Right cardiac atrium (tissue), 5 donors: ENCODE measurements at regions of chr11 and their contacts with region 1.

Region 1: DNA sequence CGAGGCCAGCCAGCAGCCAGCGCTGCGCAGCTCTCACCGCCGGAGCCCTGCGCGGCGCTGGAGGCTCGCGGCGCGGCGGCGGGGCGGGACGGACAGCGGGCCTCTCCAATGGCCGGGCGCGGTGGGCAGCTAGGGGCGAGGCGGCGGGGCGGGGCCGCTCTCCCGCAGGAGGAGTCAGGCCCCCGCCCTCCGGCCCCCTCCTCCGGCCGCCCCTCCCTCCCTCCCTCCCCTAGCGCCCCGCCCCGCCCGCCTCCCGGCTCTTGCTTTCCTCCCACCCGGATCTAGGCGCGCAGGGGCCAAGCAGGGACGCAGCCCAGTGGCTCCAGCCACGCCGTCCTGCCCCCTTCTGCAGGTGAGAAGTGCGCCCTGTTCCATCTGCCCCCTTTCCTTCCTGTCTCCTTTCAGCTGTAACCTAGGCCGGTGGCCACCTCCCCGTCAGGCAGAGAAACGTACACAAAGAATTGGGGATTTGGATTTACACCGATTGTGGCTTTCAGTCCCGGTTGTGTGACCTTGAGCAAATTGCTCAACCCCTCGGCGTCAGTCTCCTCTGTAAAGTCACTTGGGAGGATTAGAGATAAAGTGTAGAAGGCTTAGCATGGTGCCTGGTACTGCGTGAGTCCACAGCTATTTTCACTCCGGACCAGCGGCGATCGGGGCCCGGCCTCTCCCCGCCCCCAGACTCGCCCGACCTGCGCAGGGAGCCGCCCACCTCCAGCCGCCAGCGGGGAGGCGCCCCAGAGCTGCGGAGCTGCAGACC is at the start of gene FZD4:
- DNase-seq: peak; percentile 94 to 98 (median 97)
- ATAC-seq: peak; percentile 94 to 95
- H3K4me3 ChIP-seq: peak within 1 kb of the TSS; percentile 87
- H3K27ac ChIP-seq: peak within 1 kb of the TSS; percentile 97
- H3K4me1 ChIP-seq: peaks cover 8% of the 10 kb centered on the region
- H3K27me3 ChIP-seq: no peaks in the 10 kb centered on the region
- total RNA-seq, gene FZD4: 20.6 to 28.3 (median 24.6) TPM

Region 2: DNA sequence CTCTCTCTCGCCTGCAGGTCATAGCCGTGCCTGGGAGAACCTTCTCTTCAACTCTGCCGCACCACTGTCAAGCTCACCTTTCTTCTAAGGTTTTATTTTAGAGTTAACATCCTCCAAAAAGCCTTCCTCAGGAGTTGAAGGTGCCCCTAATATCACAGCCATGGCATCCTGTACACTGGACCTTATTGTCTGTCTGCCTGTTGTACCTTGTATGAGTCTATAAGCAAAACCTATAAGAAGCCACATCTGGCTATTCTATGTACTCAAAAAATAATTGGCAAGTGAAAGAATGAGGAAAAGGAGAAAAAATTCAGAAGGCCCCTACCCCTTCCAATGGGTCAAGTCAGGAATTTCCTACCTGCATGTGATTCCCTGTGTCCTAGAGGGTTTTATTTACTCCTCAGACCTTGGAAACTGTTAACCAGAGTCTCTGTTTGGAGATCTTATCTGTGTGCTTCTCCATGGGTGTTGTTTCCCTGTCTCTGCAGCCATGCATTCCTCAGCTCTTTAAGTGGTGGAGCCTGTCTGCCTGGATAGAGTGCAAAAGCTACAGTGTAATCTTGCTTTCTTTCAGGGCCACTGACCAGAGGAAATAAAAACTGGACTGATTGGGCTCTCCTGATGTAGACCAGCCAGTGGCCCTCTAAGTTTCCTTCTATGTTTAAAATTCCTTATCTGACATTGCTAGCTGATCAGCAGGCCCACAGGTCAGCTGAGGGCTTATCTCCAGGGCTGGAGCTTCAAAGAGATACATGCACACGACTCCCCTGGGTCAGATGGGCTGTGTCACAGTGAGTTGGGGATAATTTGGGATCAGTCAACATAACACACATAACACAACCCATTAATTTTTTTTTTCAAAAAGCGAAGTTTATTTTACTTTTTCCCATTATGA is 44.6 kb after region 1 on chr11:
- intact Hi-C with region 1: loop called in 1 of 4 experiments (anchors 5 kb)
- DNase-seq: peak in 1 of 3 donors; percentile 72
- ATAC-seq: peak; percentile 90
- H3K4me3 ChIP-seq: no peak overlapping the region
- H3K27ac ChIP-seq: peak overlapping the region; percentile 59
- H3K4me1 ChIP-seq: no peaks in the 10 kb centered on the region
- H3K27me3 ChIP-seq: no peaks in the 10 kb centered on the region

Region 3: DNA sequence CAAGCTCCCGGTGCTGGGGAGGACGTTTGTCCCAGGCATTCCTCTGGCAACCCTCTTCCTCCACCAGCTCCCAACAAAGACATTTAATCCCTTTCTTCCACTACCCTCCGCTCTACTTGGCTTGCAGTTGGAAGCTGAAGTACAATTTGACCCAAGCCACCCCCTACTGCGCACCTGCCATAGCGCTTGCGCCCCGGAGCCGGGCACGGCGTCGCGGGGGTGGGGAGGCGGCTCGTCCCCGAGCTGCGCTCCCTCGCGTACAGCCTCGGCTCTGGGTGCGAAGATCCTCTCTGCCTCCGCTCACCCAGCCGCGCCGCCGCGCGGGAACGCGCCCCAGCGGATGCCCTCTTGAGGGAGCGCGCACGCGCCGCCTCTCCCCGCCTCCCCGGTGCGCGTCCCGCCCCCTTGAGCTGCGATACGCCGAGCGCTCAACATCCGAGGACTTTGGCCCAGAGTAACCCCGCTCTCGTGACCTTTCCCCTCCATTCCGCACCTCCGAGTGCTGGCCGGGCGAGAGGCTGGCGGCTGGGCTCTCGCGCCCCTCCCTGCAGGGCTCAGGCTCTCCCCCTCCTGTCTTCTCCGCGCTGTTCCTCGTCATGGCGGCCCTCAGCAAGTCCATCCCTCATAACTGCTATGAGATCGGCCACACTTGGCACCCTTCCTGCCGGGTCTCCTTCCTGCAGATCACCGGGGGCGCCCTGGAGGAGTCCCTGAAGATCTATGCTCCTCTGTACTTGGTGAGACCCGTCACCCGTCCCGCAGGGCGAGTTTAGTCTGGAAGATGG is 82.1 kb after region 1 on chr11 and contains the start of gene TMEM135:
- intact Hi-C with region 1: loop called in 2 of 4 experiments (anchors 5 kb)
- DNase-seq: peak; percentile 96 to 98 (median 98)
- ATAC-seq: peak; percentile 99
- H3K4me3 ChIP-seq: peak within 1 kb of the TSS; percentile 84
- H3K27ac ChIP-seq: peak within 1 kb of the TSS; percentile 82
- H3K4me1 ChIP-seq: peaks cover 2% of the 10 kb centered on the region
- H3K27me3 ChIP-seq: no peaks in the 10 kb centered on the region
- total RNA-seq, gene TMEM135: 17.3 to 24.1 (median 18.7) TPM

Region 4: DNA sequence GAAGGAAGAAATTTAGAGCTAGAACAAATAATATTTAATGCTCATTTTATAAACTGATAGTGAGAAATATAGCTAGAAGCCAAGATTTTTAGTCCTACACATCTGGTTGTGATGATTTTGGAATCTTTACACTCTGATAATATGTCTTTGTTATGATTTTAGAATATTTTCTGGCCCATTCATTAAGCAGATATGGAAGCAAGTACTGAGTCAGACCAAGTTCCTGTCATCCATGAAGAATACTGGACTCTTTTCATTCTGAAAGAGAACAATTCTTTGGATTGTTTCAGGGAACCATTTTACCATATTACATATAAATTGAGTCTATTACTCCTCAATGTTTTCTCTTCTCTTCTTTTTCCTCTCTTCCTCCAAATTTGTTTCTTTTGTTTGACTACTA is 309.6 kb after region 1 on chr11:
- intact Hi-C with region 1: no loop called
- DNase-seq: no peak
- ATAC-seq: peak in 1 of 2 donors; percentile 68
- H3K4me3 ChIP-seq: no peak overlapping the region
- H3K27ac ChIP-seq: no peak overlapping the region
- H3K4me1 ChIP-seq: peaks cover 2% of the 10 kb centered on the region
- H3K27me3 ChIP-seq: no peaks in the 10 kb centered on the region